Activated T-helper 1 cell treated with anti-CD3 and anti-CD28 coated beads, Interleukin-12 subunit alpha, Interleukin-12 subunit beta, Interleukin-2, Interleukin-4 antibody, amounts not matched to agents 30 ng/mL and 10 ng/mL and 1 ng/mL, durations not matched to agents 14 hours and 24 hours and 36 hours (primary cell): ENCODE measurements at regions of chr15 and their contacts with region 1.

Region 1: GRCh38 chr15:38354315-38354929 is 99.5 kb upstream of the FAM98B start:
- DNase-seq: peak; percentile 7
- H3K4me3 Mint-ChIP-seq: no peak overlapping the region
- H3K27ac Mint-ChIP-seq: no peak overlapping the region
- H3K4me1 Mint-ChIP-seq: no peaks in the 10 kb centered on the region
- H3K27me3 Mint-ChIP-seq: peaks cover 14% of the 10 kb centered on the region

Region 2: DNA sequence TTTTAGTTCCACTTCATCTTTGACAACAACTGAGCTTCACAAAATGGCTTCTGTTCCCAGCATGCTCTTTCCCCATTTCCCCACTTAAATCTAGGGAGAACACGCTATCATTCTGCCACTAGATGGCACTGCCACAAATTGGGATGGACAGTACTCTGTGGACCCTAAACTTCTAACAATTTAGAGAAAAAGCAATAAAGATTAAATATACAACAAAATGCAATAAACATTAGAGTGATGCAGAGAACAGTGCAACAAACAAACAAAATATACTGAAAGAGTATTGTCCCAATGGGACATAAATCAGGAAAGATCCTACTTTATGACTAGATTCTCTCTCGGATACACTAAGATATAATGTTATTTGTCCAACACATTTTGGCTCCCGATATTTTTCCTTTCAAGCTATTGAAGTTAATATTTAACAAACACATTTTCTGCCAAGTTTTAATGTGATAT is 589.7 kb before region 1 on chr15:
- intact Hi-C with region 1: loop called (anchors 2 kb)
- DNase-seq: no peak
- H3K4me3 Mint-ChIP-seq: no peak overlapping the region
- H3K27ac Mint-ChIP-seq: no peak overlapping the region
- H3K4me1 Mint-ChIP-seq: no peaks in the 10 kb centered on the region
- H3K27me3 Mint-ChIP-seq: peaks cover 2% of the 10 kb centered on the region

Region 3: DNA sequence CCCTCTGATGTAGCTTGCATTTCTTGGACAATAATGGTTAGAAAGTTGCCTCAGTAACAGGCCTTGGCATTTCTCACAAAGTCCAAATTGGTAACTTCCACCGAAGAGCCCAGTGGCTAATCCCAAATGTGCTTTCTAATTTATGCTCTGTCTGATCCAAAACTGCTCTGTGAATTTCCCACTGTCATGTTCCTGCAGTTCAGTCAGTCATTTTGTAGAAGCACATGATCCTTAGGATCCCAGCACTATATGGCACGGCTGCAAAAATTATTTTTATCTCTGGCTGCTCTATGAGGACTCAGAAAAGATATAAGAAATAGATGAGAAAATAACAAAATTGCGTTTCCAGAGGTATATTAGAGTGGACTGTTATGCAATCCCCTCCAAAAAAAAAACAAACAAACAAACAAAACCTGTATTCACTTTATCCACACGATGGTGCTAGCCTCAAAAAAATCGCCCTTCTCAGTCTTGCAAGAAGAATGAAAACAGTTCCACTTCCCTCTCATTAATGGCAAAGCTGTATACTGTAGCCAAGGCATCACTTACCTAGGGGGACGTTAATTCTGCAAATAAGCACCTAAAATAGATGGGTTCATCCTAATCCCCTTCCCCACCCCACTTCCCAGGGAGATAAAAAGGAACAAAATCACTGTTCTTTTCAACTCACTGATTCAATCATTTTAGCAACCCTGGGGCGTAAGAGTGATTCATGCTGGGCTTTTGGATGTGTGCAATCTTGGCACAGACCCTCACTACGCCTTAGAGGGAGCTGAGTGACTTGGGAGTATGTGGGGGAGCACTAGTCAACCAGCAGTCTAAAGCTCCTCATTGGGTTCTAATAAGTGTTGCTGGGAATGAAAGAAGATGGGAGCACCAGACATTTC is 358.7 kb before region 1 on chr15:
- intact Hi-C with region 1: loop called (anchors 1 kb)
- DNase-seq: no peak
- H3K4me3 Mint-ChIP-seq: no peak overlapping the region
- H3K27ac Mint-ChIP-seq: no peak overlapping the region
- H3K4me1 Mint-ChIP-seq: no peaks in the 10 kb centered on the region
- H3K27me3 Mint-ChIP-seq: peaks cover 7% of the 10 kb centered on the region

Region 4: DNA sequence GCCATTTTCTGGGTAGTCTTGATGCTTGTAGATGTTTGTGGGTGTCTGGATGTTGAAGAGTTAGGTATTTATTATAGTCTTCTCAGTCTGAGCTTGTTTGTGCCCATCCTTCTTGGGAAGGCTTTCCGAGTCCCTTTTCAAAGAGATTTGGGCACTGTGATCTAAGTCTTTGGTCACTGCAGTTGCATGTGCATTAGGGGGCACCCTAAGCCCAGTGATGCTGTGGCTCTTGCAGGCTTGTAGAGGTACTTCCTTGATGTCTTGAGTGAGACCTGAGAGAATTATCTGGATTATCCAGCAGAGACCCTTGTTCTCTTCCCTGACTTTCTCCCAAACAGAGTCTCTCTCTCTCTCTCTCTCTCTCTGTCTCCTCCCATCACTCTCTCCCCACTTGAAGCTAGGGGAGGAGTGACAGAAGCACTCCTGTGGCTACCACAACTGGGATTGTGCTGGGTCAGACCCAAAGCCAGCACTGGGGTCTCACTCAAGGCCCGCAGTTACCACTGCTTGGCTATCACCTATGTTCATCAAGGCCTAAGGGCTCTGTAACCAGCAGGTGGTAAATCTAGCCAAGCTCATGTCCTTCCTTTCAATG is 351.4 kb before region 1 on chr15:
- intact Hi-C with region 1: loop called (anchors 1 kb)
- DNase-seq: peak; percentile 10
- H3K4me3 Mint-ChIP-seq: no peak overlapping the region
- H3K27ac Mint-ChIP-seq: no peak overlapping the region
- H3K4me1 Mint-ChIP-seq: no peaks in the 10 kb centered on the region
- H3K27me3 Mint-ChIP-seq: peaks cover 7% of the 10 kb centered on the region